Activated B cell treated with CpG ODN at 0.5 μM for 24 hours (primary cell): ENCODE measurements at regions of chr5 and their contacts with region 1.

Region 1: DNA sequence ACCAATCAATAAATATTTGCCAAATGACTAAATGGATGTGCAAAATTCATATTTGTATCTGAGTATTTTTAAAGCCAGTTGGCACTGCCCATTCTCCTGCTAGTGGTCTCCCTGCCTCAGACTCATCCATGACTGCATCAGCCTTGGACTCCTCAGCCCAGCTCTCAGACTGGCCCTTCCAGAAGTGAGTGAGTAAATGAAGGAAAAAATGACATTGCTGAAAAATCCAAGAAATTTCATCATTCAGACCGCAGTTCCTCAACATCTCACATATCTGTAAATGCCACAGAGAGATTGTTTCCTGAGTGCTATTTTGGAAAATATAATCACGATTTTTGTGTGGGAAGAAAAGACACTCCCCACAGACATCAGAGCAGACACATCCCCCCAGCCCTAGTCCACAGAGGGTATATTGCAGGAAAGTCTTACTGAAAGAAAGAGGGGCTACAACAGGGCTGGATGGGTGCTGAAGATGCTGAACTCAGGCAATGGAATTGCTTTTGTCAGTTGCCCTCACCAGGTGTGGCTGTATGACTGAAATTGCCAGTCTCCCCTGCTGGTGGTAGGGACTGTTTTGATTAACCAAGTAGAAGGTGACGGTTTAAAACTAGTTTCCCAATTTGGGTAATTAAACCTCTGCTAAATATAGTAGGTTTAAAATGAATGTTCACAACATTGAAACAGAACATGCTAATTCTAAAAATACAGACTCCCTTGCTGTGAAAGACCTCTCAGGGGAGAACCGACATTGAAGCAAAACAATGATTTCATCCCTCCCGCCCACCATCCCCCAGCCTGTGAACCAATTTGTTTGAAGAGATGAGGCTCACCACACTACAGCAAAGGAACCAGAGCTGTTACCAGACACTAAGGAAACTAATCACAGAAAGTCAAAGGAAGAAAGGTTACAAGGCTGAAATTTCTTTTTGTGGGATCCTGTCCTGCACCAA is 158.8 kb downstream of the DEPDC1B start:
- DNase-seq: no peak
- ATAC-seq: peak; percentile 87
- H3K4me3 Mint-ChIP-seq: peak overlapping the region; percentile 60
- H3K27ac Mint-ChIP-seq: peak overlapping the region; percentile 70
- H3K4me1 Mint-ChIP-seq: peaks cover 61% of the 10 kb centered on the region
- H3K27me3 Mint-ChIP-seq: no peaks in the 10 kb centered on the region
- CTCF ChIP-seq: no peak

Region 2: DNA sequence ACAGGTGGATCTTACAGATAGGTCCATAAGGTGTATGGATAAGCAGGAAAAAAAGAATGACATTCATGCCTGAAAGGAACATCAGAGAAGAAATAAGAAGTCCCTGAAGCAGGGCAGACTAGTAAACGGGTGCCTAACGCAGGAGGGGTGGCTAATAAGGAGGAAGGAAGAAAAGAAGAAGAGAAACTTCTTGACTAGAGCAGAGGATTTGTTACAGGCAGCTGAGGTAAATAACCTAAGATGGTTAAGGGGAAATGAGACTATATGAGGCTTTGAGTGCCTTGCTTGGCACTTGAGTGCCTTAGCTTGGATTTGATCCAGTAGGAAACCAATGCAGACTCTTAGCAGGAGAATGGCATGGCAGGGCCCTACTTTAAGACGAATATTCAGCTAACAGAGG is 334.1 kb before region 1 on chr5:
- CTCF ChIA-PET with region 1: no interaction called
- POLR2A ChIA-PET with region 1: no interaction called
- intact Hi-C with region 1: loop called (anchors 1 kb)
- DNase-seq: no peak
- ATAC-seq: peak; percentile 95
- H3K4me3 Mint-ChIP-seq: peak overlapping the region; percentile 52
- H3K27ac Mint-ChIP-seq: peak overlapping the region; percentile 67
- H3K4me1 Mint-ChIP-seq: peaks cover 23% of the 10 kb centered on the region
- H3K27me3 Mint-ChIP-seq: no peaks in the 10 kb centered on the region
- CTCF ChIP-seq: no peak

Region 3: GRCh38 chr5:60494635-60495034 is 46.5 kb before region 1 on chr5:
- CTCF ChIA-PET with region 1: no interaction called
- POLR2A ChIA-PET with region 1: no interaction called
- intact Hi-C with region 1: loop called (anchors 5 kb)
- DNase-seq: no peak
- ATAC-seq: peak; percentile 77
- H3K4me3 Mint-ChIP-seq: peak overlapping the region; percentile 50
- H3K27ac Mint-ChIP-seq: peak overlapping the region; percentile 27
- H3K4me1 Mint-ChIP-seq: peaks cover 33% of the 10 kb centered on the region
- H3K27me3 Mint-ChIP-seq: no peaks in the 10 kb centered on the region
- CTCF ChIP-seq: no peak

Region 4: GRCh38 chr5:60522292-60522905 is 18.7 kb before region 1 on chr5:
- CTCF ChIA-PET with region 1: interaction called, 4 read pairs
- POLR2A ChIA-PET with region 1: interaction called, 6 read pairs
- intact Hi-C with region 1: loop called (anchors 1 kb)
- DNase-seq: no peak
- ATAC-seq: peak; percentile 78
- H3K4me3 Mint-ChIP-seq: no peak overlapping the region
- H3K27ac Mint-ChIP-seq: no peak overlapping the region
- H3K4me1 Mint-ChIP-seq: peaks cover 38% of the 10 kb centered on the region
- H3K27me3 Mint-ChIP-seq: no peaks in the 10 kb centered on the region
- CTCF ChIP-seq: no peak

Region 5: GRCh38 chr5:60794691-60795090 is 253.6 kb after region 1 on chr5:
- CTCF ChIA-PET with region 1: no interaction called
- POLR2A ChIA-PET with region 1: no interaction called
- intact Hi-C with region 1: no loop called
- DNase-seq: no peak
- ATAC-seq: no peak
- H3K4me3 Mint-ChIP-seq: no peak overlapping the region
- H3K27ac Mint-ChIP-seq: no peak overlapping the region
- H3K4me1 Mint-ChIP-seq: no peaks in the 10 kb centered on the region
- H3K27me3 Mint-ChIP-seq: peaks cover 4% of the 10 kb centered on the region
- CTCF ChIP-seq: no peak